Natural killer cell (primary cell): ENCODE measurements at regions of chr1 and their contacts with region 1.

Region 1: GRCh38 chr1:11979851-11980675 is at the start of gene MFN2:
- DNase-seq: peak; percentile 93 to 95
- ATAC-seq: peak; percentile 89 to 97 (median 92)
- H3K4me3 ChIP-seq: peak within 1 kb of the TSS; percentile 75
- H3K4me3 Mint-ChIP-seq: peak within 1 kb of the TSS; percentile 94
- H3K27ac ChIP-seq: peak within 1 kb of the TSS; percentile 93
- H3K27ac Mint-ChIP-seq: peak within 1 kb of the TSS; percentile 86 to 96
- H3K4me1 ChIP-seq: peaks cover 15% of the 10 kb centered on the region
- H3K4me1 Mint-ChIP-seq: peaks cover 44 to 48% of the 10 kb centered on the region in 2 donors
- H3K27me3 ChIP-seq: no peaks in the 10 kb centered on the region
- H3K27me3 Mint-ChIP-seq: no peaks in the 10 kb centered on the region
- CTCF ChIP-seq: no peak
- total RNA-seq, gene MFN2: 54.7 to 65.9 (median 55.8) TPM

Region 2: DNA sequence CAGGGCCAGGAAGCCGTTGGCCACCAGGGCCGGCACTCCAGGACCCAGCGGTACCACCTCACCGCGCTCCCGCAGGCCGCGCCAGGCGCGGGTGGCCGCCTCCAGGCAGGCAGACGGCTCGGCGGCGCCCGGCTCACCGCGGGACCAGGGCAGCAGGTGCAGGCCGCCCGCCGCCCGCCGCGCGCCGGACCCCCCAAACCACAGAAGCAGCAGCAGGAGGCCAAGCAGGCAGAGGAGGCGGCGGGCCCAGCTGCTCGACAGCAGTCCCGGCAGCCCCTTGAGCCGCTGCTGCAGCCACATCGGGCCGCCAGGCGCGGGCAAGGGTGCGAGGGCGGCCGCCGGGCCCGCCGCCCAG is 54.1 kb before region 1 on chr1:
- intact Hi-C with region 1: loop called (anchors 1 kb)
- DNase-seq: no peak
- ATAC-seq: peak; percentile 34 to 47 (median 47)
- H3K4me3 ChIP-seq: peak overlapping the region; percentile 22
- H3K4me3 Mint-ChIP-seq: no peak overlapping the region
- H3K27ac ChIP-seq: no peak overlapping the region
- H3K27ac Mint-ChIP-seq: peak overlapping the region; percentile 63 to 65
- H3K4me1 ChIP-seq: peaks cover 40% of the 10 kb centered on the region
- H3K4me1 Mint-ChIP-seq: peaks cover 22 to 31% of the 10 kb centered on the region in 2 donors
- H3K27me3 ChIP-seq: no peaks in the 10 kb centered on the region
- H3K27me3 Mint-ChIP-seq: no peaks in the 10 kb centered on the region
- CTCF ChIP-seq: no peak

Region 3: DNA sequence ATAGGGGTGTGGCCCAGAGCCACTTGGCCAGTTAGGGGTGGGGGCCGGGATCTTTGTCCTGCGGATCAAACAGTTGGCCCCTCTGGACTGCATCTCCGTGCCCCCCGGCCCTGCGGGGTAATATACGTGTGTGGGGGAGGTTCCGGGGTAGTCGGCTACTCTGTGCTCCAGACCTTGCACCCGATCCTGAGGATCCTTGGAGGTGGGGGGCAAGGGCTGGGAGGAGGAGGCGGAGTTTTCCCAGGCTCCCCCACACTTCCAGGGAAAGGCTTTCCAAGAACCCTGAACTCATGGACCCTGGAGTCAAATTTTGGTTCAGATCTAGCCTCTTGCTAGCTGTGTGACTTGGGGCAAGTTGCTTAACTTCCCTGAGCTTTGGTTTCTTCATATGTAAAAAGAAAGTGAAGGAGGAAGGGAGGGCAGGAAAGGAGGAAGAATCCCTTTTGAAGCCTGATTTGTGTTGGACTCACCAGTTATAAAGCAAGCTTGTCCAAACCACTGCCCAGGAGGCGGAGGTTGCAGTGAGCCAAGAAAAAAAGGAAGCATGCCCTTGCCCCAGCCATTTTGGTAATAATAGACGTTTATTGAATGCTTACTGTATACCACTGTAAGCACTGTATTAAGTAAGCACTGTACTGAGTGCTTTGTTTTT is 39.9 kb after region 1 on chr1:
- intact Hi-C with region 1: loop called (anchors 1 kb)
- DNase-seq: peak in 1 of 2 donors; percentile 23
- ATAC-seq: no peak
- H3K4me3 ChIP-seq: peak overlapping the region; percentile 99
- H3K4me3 Mint-ChIP-seq: peak overlapping the region; percentile 91
- H3K27ac ChIP-seq: peak overlapping the region; percentile 47
- H3K27ac Mint-ChIP-seq: peak overlapping the region; percentile 73 to 76
- H3K4me1 ChIP-seq: peaks cover 17% of the 10 kb centered on the region
- H3K4me1 Mint-ChIP-seq: peaks cover 6 to 14% of the 10 kb centered on the region in 2 donors
- H3K27me3 ChIP-seq: no peaks in the 10 kb centered on the region
- H3K27me3 Mint-ChIP-seq: no peaks in the 10 kb centered on the region
- CTCF ChIP-seq: no peak